Activated CD4-positive, alpha-beta T cell treated with anti-CD3 and anti-CD28 coated beads for 36 hours (primary cell): ENCODE measurements at regions of chr2 and their contacts with region 1.

Region 1: DNA sequence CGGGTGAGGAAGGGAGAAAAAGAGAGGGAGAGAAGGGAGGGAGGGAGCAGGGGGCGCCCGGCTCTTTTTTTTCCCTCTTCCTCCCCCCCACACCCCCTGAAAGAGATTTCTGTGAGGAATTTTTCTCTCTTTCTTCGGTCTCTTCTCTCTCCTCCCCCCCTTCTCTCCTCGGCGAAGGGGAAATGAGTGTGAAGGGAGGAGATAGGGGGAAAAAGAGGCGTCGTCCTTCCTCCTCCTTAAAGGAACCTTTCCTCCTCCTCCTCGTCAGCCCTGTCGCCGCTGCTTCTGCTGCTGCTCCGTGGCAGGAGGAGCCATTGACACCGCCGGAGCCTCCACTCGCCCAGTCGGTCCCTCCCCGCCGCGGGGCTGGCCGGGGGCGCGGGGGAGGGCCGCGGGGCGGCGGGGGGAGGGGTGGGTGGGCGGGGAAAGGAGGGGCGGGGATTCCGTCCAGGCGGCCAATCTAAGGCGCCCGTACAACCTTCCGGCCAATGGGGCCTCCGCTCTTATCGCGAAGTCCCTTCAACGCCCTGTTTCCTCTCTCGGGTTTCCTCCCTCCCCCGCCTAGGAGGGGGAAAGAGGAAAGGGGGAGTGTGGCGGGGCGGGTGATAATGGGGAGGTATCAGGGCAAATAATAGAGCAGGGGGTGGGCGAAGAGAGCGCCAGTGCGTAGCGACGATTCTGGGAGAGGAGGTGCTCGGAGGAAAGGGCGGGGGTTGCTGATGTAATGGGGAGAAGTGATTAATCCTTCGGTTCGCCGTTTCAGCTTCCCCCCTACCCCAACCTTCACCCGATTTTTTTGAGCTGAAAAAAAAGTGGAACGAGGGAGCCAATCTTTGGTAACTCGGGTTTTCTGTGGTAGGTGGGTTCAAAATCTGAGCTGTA is at the start of gene FBXO11:
- DNase-seq: peak; percentile 97
- ATAC-seq: peak; percentile 85
- H3K4me3 Mint-ChIP-seq: peak within 1 kb of the TSS; percentile 95
- H3K27ac Mint-ChIP-seq: peak within 1 kb of the TSS; percentile 98
- H3K4me1 Mint-ChIP-seq: peaks cover 25% of the 10 kb centered on the region
- H3K27me3 Mint-ChIP-seq: no peaks in the 10 kb centered on the region
- total RNA-seq, gene FBXO11: 33.0 to 40.3 TPM

Region 2: GRCh38 chr2:47520825-47521665 is 385.4 kb before region 1 on chr2:
- CTCF ChIA-PET with region 1: no interaction called
- POLR2A ChIA-PET with region 1: no interaction called
- intact Hi-C with region 1: loop called in 1 of 2 experiments (anchors 2 kb)
- DNase-seq: peak; percentile 87
- ATAC-seq: peak; percentile 87
- H3K4me3 Mint-ChIP-seq: peak overlapping the region; percentile 83
- H3K27ac Mint-ChIP-seq: peak overlapping the region; percentile 92
- H3K4me1 Mint-ChIP-seq: peaks cover 16% of the 10 kb centered on the region
- H3K27me3 Mint-ChIP-seq: no peaks in the 10 kb centered on the region

Region 3: GRCh38 chr2:47888581-47889280 is 17.7 kb before region 1 on chr2:
- CTCF ChIA-PET with region 1: interaction called, 10 read pairs
- POLR2A ChIA-PET with region 1: interaction called, 5 read pairs
- intact Hi-C with region 1: no loop called
- DNase-seq: no peak
- ATAC-seq: peak; percentile 51
- H3K4me3 Mint-ChIP-seq: no peak overlapping the region
- H3K27ac Mint-ChIP-seq: peak overlapping the region; percentile 40
- H3K4me1 Mint-ChIP-seq: peaks cover 72% of the 10 kb centered on the region
- H3K27me3 Mint-ChIP-seq: no peaks in the 10 kb centered on the region

Region 4: DNA sequence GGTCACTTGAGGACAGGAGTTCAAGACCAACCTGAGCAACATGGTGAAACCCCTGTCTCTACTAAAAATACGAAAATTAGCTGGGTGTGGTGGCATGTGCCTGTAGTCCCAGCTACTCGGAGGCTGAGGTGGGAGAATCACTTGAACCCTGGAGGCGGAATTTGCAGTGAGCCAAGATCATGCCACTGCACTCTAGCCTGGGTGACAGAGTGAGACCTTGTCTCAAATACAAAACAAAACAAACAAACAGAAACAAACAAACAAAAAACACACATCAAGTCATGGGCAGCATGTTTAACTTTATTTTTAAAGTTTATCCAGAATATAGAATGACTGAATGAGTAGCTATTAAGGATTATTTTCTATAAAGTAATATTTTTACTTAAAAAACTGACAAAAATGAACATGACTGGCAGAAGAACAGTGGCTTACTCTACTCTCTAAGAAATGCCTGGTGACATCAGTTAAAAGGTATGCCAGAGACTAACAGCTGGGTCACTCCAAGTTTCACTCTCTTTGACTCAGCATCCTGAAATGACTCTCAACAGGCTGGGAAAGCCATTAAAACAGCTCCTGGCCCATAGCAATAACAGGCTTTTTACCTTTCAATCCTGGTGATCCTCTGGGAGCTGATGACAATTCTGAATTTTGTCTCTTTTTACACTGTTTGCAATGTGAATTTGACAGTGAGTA is 342.0 kb after region 1 on chr2:
- CTCF ChIA-PET with region 1: no interaction called
- POLR2A ChIA-PET with region 1: no interaction called
- intact Hi-C with region 1: loop called in 1 of 2 experiments (anchors 5 kb)
- DNase-seq: peak; percentile 34
- ATAC-seq: peak; percentile 94
- H3K4me3 Mint-ChIP-seq: no peak overlapping the region
- H3K27ac Mint-ChIP-seq: no peak overlapping the region
- H3K4me1 Mint-ChIP-seq: peaks cover 12% of the 10 kb centered on the region
- H3K27me3 Mint-ChIP-seq: no peaks in the 10 kb centered on the region

Region 5: GRCh38 chr2:48420512-48421197 is 514.3 kb after region 1 on chr2:
- CTCF ChIA-PET with region 1: no interaction called
- POLR2A ChIA-PET with region 1: no interaction called
- intact Hi-C with region 1: loop called (anchors 1 kb)
- DNase-seq: peak; percentile 97
- ATAC-seq: peak; percentile 93
- H3K4me3 Mint-ChIP-seq: peak overlapping the region; percentile 12
- H3K27ac Mint-ChIP-seq: peak overlapping the region; percentile 49
- H3K4me1 Mint-ChIP-seq: peaks cover 30% of the 10 kb centered on the region
- H3K27me3 Mint-ChIP-seq: peaks cover 2% of the 10 kb centered on the region